Activated naive CD4-positive, alpha-beta T cell treated with anti-CD3 and anti-CD28 coated beads for 36 hours (primary cell): ENCODE measurements at regions of chr14 and their contacts with region 1.

Region 1: GRCh38 chr14:61703342-61704129 is 8.2 kb downstream of the HIF1A start:
- DNase-seq: no peak
- H3K4me3 Mint-ChIP-seq: peak overlapping the region; percentile 62
- H3K27ac Mint-ChIP-seq: peak overlapping the region; percentile 84
- H3K4me1 Mint-ChIP-seq: peaks cover 74% of the 10 kb centered on the region
- H3K27me3 Mint-ChIP-seq: no peaks in the 10 kb centered on the region

Region 2: GRCh38 chr14:61713724-61714414 is 10.3 kb after region 1 on chr14:
- CTCF ChIA-PET with region 1: interaction called, 4 read pairs
- intact Hi-C with region 1: loop called (anchors 1 kb)
- DNase-seq: no peak
- H3K4me3 Mint-ChIP-seq: peak overlapping the region; percentile 30
- H3K27ac Mint-ChIP-seq: peak overlapping the region; percentile 16
- H3K4me1 Mint-ChIP-seq: peaks cover 92% of the 10 kb centered on the region
- H3K27me3 Mint-ChIP-seq: no peaks in the 10 kb centered on the region

Region 3: GRCh38 chr14:61719344-61720293 is 16.1 kb after region 1 on chr14:
- CTCF ChIA-PET with region 1: interaction called, 4 read pairs
- intact Hi-C with region 1: loop called (anchors 2 kb)
- DNase-seq: no peak
- H3K4me3 Mint-ChIP-seq: peak overlapping the region; percentile 46
- H3K27ac Mint-ChIP-seq: peak overlapping the region; percentile 56
- H3K4me1 Mint-ChIP-seq: peaks cover 85% of the 10 kb centered on the region
- H3K27me3 Mint-ChIP-seq: no peaks in the 10 kb centered on the region